ENCODE measurements at regions of chr12 and their contacts with region 1.

Region 1: DNA sequence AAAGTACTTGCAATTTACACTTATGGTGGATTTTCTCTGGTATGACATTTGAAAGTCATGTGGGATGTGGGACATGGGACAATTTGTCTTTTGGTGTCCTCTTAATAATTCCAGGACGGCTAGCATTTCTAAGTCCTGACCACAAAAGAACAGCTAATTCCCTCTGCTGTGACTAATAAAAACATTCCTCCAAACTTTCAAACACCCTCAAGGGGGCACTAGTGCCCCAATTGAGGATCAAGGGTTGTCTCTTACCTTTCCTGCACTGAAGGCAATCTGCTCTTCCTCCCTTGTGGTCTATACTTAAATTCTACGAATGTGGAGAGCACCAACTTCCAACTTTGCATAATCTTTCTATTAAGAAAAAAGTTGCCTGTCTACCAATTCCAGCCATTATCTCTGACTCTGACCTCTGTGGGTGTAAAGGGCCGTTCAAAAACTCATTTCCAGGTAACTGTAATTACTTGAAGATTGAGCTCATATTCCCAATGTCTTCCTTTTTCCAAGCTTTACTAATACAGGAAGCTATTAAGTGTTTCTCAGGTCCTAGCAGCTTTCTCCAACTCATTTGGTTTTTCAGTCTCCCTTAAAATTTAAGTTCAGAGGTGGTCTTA is 210.2 kb downstream of the PTPRO start:
- DNase-seq: peak; percentile 15 to 72 (median 37)
- ATAC-seq: peak; percentile 55
- H3K4me3 ChIP-seq: no peak overlapping the region
- H3K4me3 Mint-ChIP-seq: no peak overlapping the region
- H3K27ac ChIP-seq: no peak overlapping the region
- H3K27ac Mint-ChIP-seq: no peak overlapping the region
- H3K4me1 ChIP-seq: peaks cover 25% of the 10 kb centered on the region
- H3K4me1 Mint-ChIP-seq: peaks cover 18% of the 10 kb centered on the region
- H3K27me3 ChIP-seq: no peaks in the 10 kb centered on the region
- H3K27me3 Mint-ChIP-seq: no peaks in the 10 kb centered on the region
- CTCF ChIP-seq: peak; percentile 70

Region 2: GRCh38 chr12:15276088-15276698 is 256.3 kb before region 1 on chr12:
- CTCF ChIA-PET with region 1: no interaction called
- POLR2A ChIA-PET with region 1: no interaction called
- intact Hi-C with region 1: loop called (anchors 5 kb)
- DNase-seq: peak in 2 of 9 experiments; percentile 18 to 25
- ATAC-seq: no peak
- H3K4me3 ChIP-seq: no peak overlapping the region
- H3K4me3 Mint-ChIP-seq: no peak overlapping the region
- H3K27ac ChIP-seq: no peak overlapping the region
- H3K27ac Mint-ChIP-seq: no peak overlapping the region
- H3K4me1 ChIP-seq: no peaks in the 10 kb centered on the region
- H3K4me1 Mint-ChIP-seq: peaks cover 9% of the 10 kb centered on the region
- H3K27me3 ChIP-seq: no peaks in the 10 kb centered on the region
- H3K27me3 Mint-ChIP-seq: peaks cover 9% of the 10 kb centered on the region
- CTCF ChIP-seq: peak; percentile 62

Region 3: GRCh38 chr12:15443611-15444010 is 88.9 kb before region 1 on chr12:
- CTCF ChIA-PET with region 1: no interaction called
- POLR2A ChIA-PET with region 1: no interaction called
- intact Hi-C with region 1: no loop called
- DNase-seq: no peak
- ATAC-seq: no peak
- H3K4me3 ChIP-seq: no peak overlapping the region
- H3K4me3 Mint-ChIP-seq: no peak overlapping the region
- H3K27ac ChIP-seq: no peak overlapping the region
- H3K27ac Mint-ChIP-seq: no peak overlapping the region
- H3K4me1 ChIP-seq: no peaks in the 10 kb centered on the region
- H3K4me1 Mint-ChIP-seq: no peaks in the 10 kb centered on the region
- H3K27me3 ChIP-seq: no peaks in the 10 kb centered on the region
- H3K27me3 Mint-ChIP-seq: peaks cover 8% of the 10 kb centered on the region
- CTCF ChIP-seq: no peak

Region 4: GRCh38 chr12:15546102-15546701 is 13.7 kb after region 1 on chr12:
- CTCF ChIA-PET with region 1: interaction called, 71 read pairs
- POLR2A ChIA-PET with region 1: interaction called, 23 read pairs
- intact Hi-C with region 1: loop called in 1 of 2 experiments (anchors 2 kb)
- DNase-seq: peak in 5 of 9 experiments; percentile 20 to 77 (median 56)
- ATAC-seq: peak; percentile 92
- H3K4me3 ChIP-seq: no peak overlapping the region
- H3K4me3 Mint-ChIP-seq: peak overlapping the region; percentile 62
- H3K27ac ChIP-seq: peak overlapping the region; percentile 57 to 61
- H3K27ac Mint-ChIP-seq: peak overlapping the region; percentile 97
- H3K4me1 ChIP-seq: peaks cover 39% of the 10 kb centered on the region
- H3K4me1 Mint-ChIP-seq: peaks cover 40% of the 10 kb centered on the region
- H3K27me3 ChIP-seq: no peaks in the 10 kb centered on the region
- H3K27me3 Mint-ChIP-seq: no peaks in the 10 kb centered on the region
- CTCF ChIP-seq: no peak

Region 5: DNA sequence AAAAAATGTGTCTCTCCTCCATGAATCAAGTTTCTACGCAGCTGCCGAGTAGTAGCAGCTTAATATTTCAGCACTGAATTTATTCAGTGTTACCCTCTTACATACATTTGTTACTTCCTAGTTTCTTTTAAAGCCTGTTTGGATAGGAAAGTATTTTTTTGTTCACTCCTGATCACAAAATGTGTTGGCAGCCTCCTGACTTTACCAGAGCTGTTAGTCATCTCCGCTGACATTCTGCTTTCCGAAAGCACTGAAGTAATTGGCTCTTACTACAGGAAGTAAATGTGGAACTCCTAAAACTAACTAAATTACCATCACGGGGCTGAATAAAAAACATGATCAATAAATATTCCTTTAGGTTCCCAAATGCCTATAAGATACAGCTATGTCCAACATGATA is 31.2 kb after region 1 on chr12:
- CTCF ChIA-PET with region 1: interaction called, 33 read pairs
- POLR2A ChIA-PET with region 1: no interaction called
- intact Hi-C with region 1: no loop called
- DNase-seq: peak in 3 of 9 experiments; percentile 11 to 58 (median 36)
- ATAC-seq: peak; percentile 93
- H3K4me3 ChIP-seq: peak overlapping the region in 1 of 2 experiments; percentile 38
- H3K4me3 Mint-ChIP-seq: peak overlapping the region; percentile 86
- H3K27ac ChIP-seq: peak overlapping the region; percentile 20 to 50
- H3K27ac Mint-ChIP-seq: peak overlapping the region; percentile 95
- H3K4me1 ChIP-seq: peaks cover 30% of the 10 kb centered on the region
- H3K4me1 Mint-ChIP-seq: peaks cover 36% of the 10 kb centered on the region
- H3K27me3 ChIP-seq: no peaks in the 10 kb centered on the region
- H3K27me3 Mint-ChIP-seq: no peaks in the 10 kb centered on the region
- CTCF ChIP-seq: no peak

Region 6: DNA sequence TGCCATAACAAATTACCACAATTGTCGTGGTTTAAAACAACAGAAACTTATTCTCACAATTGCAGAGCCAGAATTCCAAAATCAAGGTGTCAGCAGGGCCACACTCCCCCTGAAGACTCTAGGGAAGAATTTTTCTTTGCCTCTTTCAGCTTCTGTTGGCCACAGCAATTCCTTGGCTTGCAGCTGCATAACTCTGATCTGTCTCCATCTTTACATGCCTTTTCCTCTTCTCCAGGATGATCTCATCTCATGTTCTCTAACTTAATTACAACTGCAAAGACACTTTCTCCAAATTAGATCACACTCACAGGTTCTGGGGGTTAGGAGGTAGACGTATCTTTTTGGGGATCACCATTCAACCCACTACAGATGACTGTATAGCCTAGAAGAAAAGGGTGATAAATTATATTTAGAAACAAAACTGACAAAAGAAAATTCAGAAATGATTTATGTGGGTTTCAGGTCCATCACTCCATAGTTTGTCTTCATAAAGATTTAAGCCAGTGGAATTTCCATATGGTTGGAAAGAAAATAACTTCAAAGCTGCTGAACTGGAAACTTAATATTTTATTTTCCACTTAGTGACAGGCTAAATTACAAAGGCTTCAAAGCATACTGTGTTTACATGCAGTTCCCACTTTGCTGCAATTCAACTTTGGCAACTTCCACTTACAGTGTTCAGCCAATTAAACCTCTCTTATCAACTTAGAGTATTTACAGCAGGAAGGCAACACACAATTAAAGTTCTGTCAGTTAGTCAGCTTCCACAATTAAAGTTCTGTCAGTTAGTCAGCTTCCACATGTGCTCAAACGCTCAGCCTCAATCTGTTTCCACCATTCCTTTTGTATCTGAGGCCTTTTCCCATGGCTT is 43.4 kb after region 1 on chr12:
- CTCF ChIA-PET with region 1: interaction called, 277 read pairs
- POLR2A ChIA-PET with region 1: interaction called, 4 read pairs
- intact Hi-C with region 1: loop called in 1 of 2 experiments (anchors 1 kb)
- DNase-seq: no peak
- ATAC-seq: no peak
- H3K4me3 ChIP-seq: no peak overlapping the region
- H3K4me3 Mint-ChIP-seq: no peak overlapping the region
- H3K27ac ChIP-seq: no peak overlapping the region
- H3K27ac Mint-ChIP-seq: no peak overlapping the region
- H3K4me1 ChIP-seq: peaks cover 6% of the 10 kb centered on the region
- H3K4me1 Mint-ChIP-seq: peaks cover 14% of the 10 kb centered on the region
- H3K27me3 ChIP-seq: no peaks in the 10 kb centered on the region
- H3K27me3 Mint-ChIP-seq: no peaks in the 10 kb centered on the region
- CTCF ChIP-seq: no peak

Region 7: GRCh38 chr12:15590180-15590826 is 57.8 kb after region 1 on chr12:
- CTCF ChIA-PET with region 1: interaction called, 277 read pairs
- POLR2A ChIA-PET with region 1: interaction called, 4 read pairs
- intact Hi-C with region 1: no loop called
- DNase-seq: peak; percentile 2 to 79 (median 34)
- ATAC-seq: peak; percentile 99
- H3K4me3 ChIP-seq: peak overlapping the region; percentile 15 to 39
- H3K4me3 Mint-ChIP-seq: peak overlapping the region; percentile 80
- H3K27ac ChIP-seq: no peak overlapping the region
- H3K27ac Mint-ChIP-seq: peak overlapping the region; percentile 77
- H3K4me1 ChIP-seq: no peaks in the 10 kb centered on the region
- H3K4me1 Mint-ChIP-seq: peaks cover 9% of the 10 kb centered on the region
- H3K27me3 ChIP-seq: peaks cover 0 to 4% of the 10 kb centered on the region in 2 experiments
- H3K27me3 Mint-ChIP-seq: no peaks in the 10 kb centered on the region
- CTCF ChIP-seq: peak; percentile 88